Posterior cingulate gyrus (tissue), 11 donors: ENCODE measurements at regions of chr15 and their contacts with region 1.

Region 1: GRCh38 chr15:57340682-57341259 is 35.5 kb upstream of the CGNL1 start:
- DNase-seq: peak in 8 of 10 donors; percentile 26 to 93 (median 48)

Region 2: DNA sequence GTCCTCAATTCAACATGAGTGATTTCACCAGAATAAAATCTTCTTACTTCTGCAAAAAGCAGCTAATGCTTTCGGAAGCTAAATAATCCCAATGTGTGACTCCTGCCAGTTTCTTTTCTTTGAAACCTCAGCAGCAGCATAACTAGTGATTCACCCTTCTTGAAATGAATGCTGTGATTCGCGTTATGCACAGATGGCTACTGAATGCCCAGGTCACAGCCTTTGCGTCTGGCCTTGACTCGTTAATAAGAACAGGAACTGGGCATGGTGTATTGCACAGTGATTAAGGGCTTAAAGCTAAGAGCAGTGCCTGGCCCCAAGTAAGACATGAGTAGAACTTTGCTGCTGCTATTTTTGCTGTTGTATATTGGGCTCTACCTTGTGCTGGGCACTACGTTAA is 54.5 kb after region 1 on chr15:
- intact Hi-C with region 1: no loop called
- DNase-seq: no peak

Region 3: DNA sequence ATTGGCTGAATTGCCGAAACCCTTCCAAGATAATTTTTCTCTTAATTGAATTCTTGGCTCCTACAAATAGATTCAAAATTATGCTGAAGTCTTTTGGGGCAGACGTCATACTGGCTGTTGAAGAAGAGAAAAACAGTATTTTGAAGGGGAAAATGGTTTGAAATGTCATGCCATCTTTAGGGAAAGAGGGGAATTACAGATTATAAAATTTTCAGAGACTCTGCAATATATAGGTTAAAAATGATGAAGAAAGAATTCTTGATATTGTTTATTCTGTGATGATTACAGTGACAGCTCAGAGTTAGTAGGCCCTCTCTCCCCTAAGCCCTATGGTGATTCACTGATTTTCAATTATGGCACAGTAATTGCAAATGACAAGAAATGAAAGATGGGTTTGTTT is 121.6 kb after region 1 on chr15:
- intact Hi-C with region 1: loop called (anchors 5 kb)
- DNase-seq: no peak

Region 4: DNA sequence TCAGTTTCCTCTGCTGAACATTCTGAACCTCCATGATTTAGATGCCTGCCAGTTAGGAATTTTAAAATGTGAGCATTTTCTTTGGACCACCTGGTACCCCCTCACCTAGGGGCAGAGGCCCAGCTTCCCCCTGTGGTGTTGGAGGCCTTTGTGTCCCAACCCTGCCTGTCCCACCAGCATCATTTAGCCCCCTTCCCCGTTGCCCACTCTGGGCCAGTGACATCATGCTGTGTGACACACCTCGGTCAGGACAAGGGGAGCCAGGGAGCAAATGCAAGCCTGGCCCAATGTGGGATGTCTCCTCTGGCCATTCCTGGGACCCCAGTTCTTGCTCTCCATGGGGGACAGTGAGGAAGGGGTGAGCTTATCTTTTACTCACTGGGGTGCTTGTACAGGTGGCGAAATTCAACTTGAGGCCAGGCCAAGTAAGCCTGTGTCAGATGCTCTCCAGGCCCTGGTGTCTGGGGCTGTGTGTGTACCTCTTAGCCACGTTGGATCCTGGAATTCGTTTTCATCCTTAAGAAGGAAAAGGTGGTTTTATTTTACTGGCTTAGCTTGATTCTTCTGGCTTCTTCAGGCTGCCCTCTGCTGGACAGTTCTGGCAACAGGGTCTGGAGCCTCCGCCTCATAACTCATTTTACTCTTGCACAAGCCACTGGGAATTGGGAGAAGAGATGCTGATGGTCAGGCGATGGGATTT is 201.2 kb after region 1 on chr15:
- intact Hi-C with region 1: loop called (anchors 5 kb)
- DNase-seq: peak; percentile 51 to 95 (median 78)

Region 5: DNA sequence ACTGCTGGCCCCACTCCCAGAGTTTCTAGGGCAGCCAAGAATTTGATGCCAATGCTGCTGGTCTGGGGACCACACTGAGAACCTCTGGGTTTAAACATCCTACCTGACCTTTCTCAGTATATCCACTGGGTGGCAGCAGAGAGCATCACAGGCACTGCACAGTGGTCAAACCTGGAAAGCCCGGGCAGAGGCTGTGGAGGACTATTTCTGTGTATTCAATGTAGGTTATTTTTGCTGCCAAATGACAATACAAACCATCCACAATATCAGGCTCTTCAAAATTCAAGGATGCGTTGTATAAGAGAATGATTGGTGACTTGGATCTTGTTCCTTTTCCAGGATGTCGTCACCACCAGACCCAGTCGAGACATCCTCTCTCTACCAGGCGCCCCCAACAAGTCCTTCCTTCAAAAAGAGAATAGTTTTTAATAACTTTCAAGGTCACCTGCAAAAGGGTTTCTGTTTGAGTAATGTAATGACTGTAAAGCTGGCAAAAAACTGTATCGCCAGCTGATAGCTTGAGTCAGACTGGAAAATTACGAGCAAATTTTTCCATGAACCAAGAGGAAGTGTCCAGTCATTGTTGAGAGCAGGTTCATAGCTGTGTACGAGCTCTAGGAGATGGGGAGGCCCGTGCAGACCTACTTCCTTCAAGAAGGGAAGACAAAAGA is 220.4 kb after region 1 on chr15:
- intact Hi-C with region 1: no loop called
- DNase-seq: peak in 7 of 10 donors; percentile 33 to 94 (median 68)